ENCODE measurements at regions of chr5 and their contacts with region 1.

Region 1: DNA sequence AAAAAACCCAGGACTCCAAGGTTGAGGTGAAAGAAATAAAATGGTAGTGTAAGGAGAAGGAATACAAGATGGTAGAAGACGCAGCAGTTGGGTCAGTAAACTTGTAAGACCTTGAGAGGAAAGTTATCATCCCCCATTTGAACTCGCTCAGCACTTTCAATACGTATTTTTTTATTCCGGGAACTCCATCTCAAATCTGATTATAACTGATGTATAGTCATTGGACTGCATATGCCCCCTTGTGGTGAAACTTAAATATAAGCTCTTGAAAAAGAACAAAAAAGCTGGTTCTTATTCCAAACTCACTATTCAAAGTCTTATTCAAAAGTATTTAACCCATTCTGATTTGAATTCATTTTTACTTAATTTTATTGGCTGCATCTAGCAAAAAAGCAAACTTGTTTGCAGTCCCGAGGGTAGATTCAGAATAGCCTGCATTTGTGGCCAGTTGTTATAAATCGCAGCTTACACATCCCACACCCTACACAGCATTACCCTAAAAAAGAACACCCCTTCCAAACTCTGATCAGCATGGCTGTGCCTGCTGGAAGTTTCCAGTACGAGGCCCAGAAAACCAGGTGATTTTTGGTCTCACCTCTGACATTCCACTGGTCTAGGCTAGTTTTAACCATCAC is 118.0 kb downstream of the ESM1 start:
- DNase-seq: peak; percentile 58

Region 2: DNA sequence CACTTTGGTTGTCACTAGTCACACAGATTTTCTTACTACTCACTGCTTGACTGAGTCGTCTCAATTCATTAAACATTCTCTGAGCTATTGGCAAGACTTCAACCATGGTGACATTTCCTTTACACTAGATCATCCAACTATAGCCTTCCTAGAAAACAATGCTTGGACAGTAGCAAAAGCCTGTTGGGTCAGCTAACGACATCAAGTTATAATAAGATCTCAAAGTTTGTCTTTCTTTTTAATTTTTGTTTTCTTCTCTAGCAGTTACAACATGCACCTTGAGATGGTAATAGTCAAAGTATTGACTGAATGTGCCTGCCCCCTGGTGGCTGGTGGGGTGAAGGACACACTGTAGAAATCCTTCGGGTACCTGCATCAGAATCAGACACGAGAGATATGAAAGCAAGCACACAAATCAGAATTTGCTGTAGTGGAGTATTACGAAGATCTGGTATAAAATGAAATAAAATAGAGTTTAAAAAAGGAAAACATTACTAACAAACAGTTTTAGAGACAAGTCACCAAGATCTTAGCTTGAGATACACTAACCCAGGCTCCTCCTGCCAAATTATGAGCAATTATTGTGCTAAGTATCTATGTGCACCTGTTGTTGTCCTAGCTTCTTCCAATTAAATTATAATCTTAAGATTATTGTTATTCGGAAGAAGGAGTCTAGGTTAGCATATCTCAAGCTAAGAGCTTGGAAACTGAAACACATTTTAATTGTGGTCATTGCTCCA is 638.2 kb before region 1 on chr5:
- in situ Hi-C with region 1: loop called (anchors 25 kb)
- DNase-seq: peak; percentile 72

Region 3: GRCh38 chr5:54517174-54518092 is 350.0 kb before region 1 on chr5 and contains the start of gene SNX18:
- in situ Hi-C with region 1: loop called (anchors 25 kb)
- DNase-seq: peak; percentile 89

Measured in KBM-7 (cell line).